Esophagus squamous epithelium (tissue), 5 donors: ENCODE measurements at regions of chr1 and their contacts with region 1.

Region 1: GRCh38 chr1:211476200-211476849 is 15.6 kb downstream of the RD3 start:
- DNase-seq: no peak
- H3K4me3 ChIP-seq: no peak overlapping the region
- H3K27ac ChIP-seq: no peak overlapping the region
- H3K4me1 ChIP-seq: peaks cover 0 to 5% (median 4%) of the 10 kb centered on the region in 3 donors
- H3K27me3 ChIP-seq: peaks cover 0 to 27% (median 0%) of the 10 kb centered on the region in 4 donors
- CTCF ChIP-seq: peak; percentile 57 to 77 (median 69)
- POLR2A ChIP-seq: no peak

Region 2: GRCh38 chr1:211323156-211324063 is 152.9 kb before region 1 on chr1:
- intact Hi-C with region 1: loop called (anchors 10 kb)
- DNase-seq: no peak
- H3K4me3 ChIP-seq: no peak overlapping the region
- H3K27ac ChIP-seq: no peak overlapping the region
- H3K4me1 ChIP-seq: peaks cover 0 to 22% (median 3%) of the 10 kb centered on the region in 3 donors
- H3K27me3 ChIP-seq: no peaks in the 10 kb centered on the region
- CTCF ChIP-seq: peak; percentile 67 to 85 (median 80)
- POLR2A ChIP-seq: no peak